ENCODE measurements at regions of chr21 and their contacts with region 1.

Region 1: GRCh38 chr21:36747815-36748383 is 49.0 kb downstream of the SIM2 start:
- DNase-seq: peak; percentile 77
- ATAC-seq: peak; percentile 79

Region 2: GRCh38 chr21:36854391-36854790 is 106.5 kb after region 1 on chr21:
- intact Hi-C with region 1: loop called (anchors 10 kb)
- DNase-seq: no peak
- ATAC-seq: peak; percentile 69